Adrenal gland (tissue), 19 donors: ENCODE measurements at regions of chr20 and their contacts with region 1.

Region 1: GRCh38 chr20:18412221-18412901 is 54.5 kb downstream of the DZANK1 start:
- DNase-seq: no peak
- H3K4me3 ChIP-seq: no peak overlapping the region
- H3K27ac ChIP-seq: no peak overlapping the region
- H3K4me1 ChIP-seq: peaks cover 0 to 4% of the 10 kb centered on the region in 2 donors
- H3K27me3 ChIP-seq: no peaks in the 10 kb centered on the region
- CTCF ChIP-seq: no peak
- POLR2A ChIP-seq: no peak

Region 2: GRCh38 chr20:18466894-18467730 is 54.8 kb after region 1 on chr20 and contains the starts of genes DZANK1 and POLR3F:
- intact Hi-C with region 1: loop called in 1 of 2 experiments (anchors 10 kb)
- DNase-seq: peak; percentile 94 to 98 (median 96)
- H3K4me3 ChIP-seq: peak within 1 kb of the TSS; percentile 50 to 99 (median 72)
- H3K27ac ChIP-seq: peak within 1 kb of the TSS; percentile 42 to 91 (median 74)
- H3K4me1 ChIP-seq: peaks cover 7 to 17% of the 10 kb centered on the region in 2 donors
- H3K27me3 ChIP-seq: no peaks in the 10 kb centered on the region
- CTCF ChIP-seq: peak in 1 of 6 experiments; percentile 12
- POLR2A ChIP-seq: peak; percentile 20 to 56
- total RNA-seq, gene DZANK1: 1.3 to 4.0 (median 2.2) TPM
- total RNA-seq, gene POLR3F: 4.4 to 26.3 (median 8.5) TPM